ENCODE measurements at regions of chrX and their contacts with region 1.

Region 1: DNA sequence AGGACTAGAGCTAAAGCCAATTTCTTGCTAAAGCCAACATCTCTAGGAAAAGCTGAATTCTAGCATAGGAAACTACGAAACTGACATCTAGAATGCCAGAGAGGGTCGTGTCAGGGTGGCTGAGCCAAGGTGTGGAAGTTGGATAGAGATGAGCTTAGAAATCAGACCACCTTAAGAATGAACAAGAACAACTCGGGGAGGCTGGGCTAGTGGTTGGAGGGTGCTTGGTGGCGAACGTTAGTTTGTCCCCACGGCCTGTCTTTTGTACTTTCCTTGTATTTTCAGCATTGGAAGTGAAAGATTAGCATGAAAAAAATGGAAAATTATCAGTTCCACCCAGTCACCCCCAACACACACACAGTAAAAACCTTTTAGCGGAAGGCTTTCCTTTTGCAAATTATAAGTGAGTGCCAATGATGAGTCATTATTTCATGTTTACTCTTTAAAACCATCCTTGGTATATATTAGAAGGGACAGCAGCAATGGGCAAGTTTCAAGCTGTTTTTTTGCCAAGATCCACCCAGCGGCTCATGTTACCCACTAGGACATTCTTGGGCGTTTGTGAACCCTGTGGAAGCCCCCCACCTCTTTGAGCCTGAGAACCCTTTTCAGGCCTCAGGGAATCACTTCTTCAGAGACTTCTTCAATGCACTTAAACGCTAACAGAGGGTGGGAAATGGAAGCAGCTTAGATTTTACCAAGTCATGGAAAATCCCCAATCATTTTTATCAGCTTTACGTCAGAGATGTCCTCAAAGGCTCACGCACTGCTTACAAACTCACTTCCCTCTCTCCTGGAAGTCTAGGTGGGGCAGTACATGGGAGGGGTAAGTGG is 4.9 kb upstream of the PPEF1 start:
- DNase-seq: no peak
- ATAC-seq: no peak
- H3K4me3 Mint-ChIP-seq: no peak overlapping the region
- H3K27ac Mint-ChIP-seq: no peak overlapping the region
- H3K4me1 Mint-ChIP-seq: no peaks in the 10 kb centered on the region
- H3K27me3 Mint-ChIP-seq: peaks cover 4% of the 10 kb centered on the region
- CTCF ChIP-seq: no peak

Region 2: GRCh38 chrX:17390325-17390992 is 1312.1 kb before region 1 on chrX:
- CTCF ChIA-PET with region 1: no interaction called
- POLR2A ChIA-PET with region 1: no interaction called
- intact Hi-C with region 1: no loop called
- DNase-seq: no peak
- ATAC-seq: no peak
- H3K4me3 Mint-ChIP-seq: no peak overlapping the region
- H3K27ac Mint-ChIP-seq: no peak overlapping the region
- H3K4me1 Mint-ChIP-seq: no peaks in the 10 kb centered on the region
- H3K27me3 Mint-ChIP-seq: no peaks in the 10 kb centered on the region
- CTCF ChIP-seq: no peak

Region 3: GRCh38 chrX:18630934-18631333 is 71.6 kb before region 1 on chrX:
- CTCF ChIA-PET with region 1: no interaction called
- POLR2A ChIA-PET with region 1: no interaction called
- intact Hi-C with region 1: loop called (anchors 10 kb)
- DNase-seq: no peak
- ATAC-seq: no peak
- H3K4me3 Mint-ChIP-seq: no peak overlapping the region
- H3K27ac Mint-ChIP-seq: no peak overlapping the region
- H3K4me1 Mint-ChIP-seq: no peaks in the 10 kb centered on the region
- H3K27me3 Mint-ChIP-seq: no peaks in the 10 kb centered on the region
- CTCF ChIP-seq: no peak

Region 4: GRCh38 chrX:18714910-18715309 is 12.3 kb after region 1 on chrX:
- CTCF ChIA-PET with region 1: no interaction called
- POLR2A ChIA-PET with region 1: no interaction called
- intact Hi-C with region 1: no loop called
- DNase-seq: no peak
- ATAC-seq: no peak
- H3K4me3 Mint-ChIP-seq: no peak overlapping the region
- H3K27ac Mint-ChIP-seq: no peak overlapping the region
- H3K4me1 Mint-ChIP-seq: no peaks in the 10 kb centered on the region
- H3K27me3 Mint-ChIP-seq: no peaks in the 10 kb centered on the region
- CTCF ChIP-seq: no peak

Region 5: GRCh38 chrX:19593690-19594089 is 891.1 kb after region 1 on chrX:
- CTCF ChIA-PET with region 1: no interaction called
- POLR2A ChIA-PET with region 1: no interaction called
- intact Hi-C with region 1: no loop called
- DNase-seq: no peak
- ATAC-seq: no peak
- H3K4me3 Mint-ChIP-seq: no peak overlapping the region
- H3K27ac Mint-ChIP-seq: no peak overlapping the region
- H3K4me1 Mint-ChIP-seq: peaks cover 2% of the 10 kb centered on the region
- H3K27me3 Mint-ChIP-seq: no peaks in the 10 kb centered on the region
- CTCF ChIP-seq: no peak